BJ (cell line): ENCODE measurements at regions of chr2 and their contacts with region 1.

Region 1: DNA sequence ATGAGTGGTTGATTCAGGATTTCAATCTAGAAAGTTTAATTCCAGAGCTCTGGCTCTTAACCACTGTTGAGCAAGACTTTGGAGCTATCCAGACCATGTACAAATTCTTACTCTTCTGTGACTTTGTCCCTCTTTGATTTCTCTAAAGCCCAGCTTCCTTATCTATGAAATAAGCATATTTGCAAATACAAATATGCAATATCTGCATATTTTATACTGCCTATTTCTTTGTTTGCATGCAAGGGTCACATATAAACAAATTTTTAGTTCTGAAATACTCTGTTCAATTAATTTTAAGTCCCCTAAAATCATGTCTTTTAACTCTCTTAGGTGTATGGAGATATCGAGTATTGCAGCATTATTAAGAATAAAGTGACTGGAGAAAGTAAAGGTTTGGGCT is 5.5 kb downstream of the RBM45 start:
- DNase-seq: no peak
- H3K4me3 ChIP-seq: no peak overlapping the region
- H3K27me3 ChIP-seq: no peaks in the 10 kb centered on the region
- CTCF ChIP-seq: no peak

Region 2: GRCh38 chr2:178128836-178129630 is 11.3 kb after region 1 on chr2:
- CTCF ChIA-PET with region 1: interaction called, 10 read pairs
- POLR2A ChIA-PET with region 1: no interaction called
- DNase-seq: no peak
- H3K4me3 ChIP-seq: no peak overlapping the region
- H3K27me3 ChIP-seq: no peaks in the 10 kb centered on the region
- CTCF ChIP-seq: no peak